Activated CD8-positive, alpha-beta memory T cell treated with anti-CD3 and anti-CD28 coated beads, Interleukin-2, amount 10 ng/mL, durations not matched to agents 7 days and 5 days (primary cell): ENCODE measurements at regions of chr4 and their contacts with region 1.

Region 1: DNA sequence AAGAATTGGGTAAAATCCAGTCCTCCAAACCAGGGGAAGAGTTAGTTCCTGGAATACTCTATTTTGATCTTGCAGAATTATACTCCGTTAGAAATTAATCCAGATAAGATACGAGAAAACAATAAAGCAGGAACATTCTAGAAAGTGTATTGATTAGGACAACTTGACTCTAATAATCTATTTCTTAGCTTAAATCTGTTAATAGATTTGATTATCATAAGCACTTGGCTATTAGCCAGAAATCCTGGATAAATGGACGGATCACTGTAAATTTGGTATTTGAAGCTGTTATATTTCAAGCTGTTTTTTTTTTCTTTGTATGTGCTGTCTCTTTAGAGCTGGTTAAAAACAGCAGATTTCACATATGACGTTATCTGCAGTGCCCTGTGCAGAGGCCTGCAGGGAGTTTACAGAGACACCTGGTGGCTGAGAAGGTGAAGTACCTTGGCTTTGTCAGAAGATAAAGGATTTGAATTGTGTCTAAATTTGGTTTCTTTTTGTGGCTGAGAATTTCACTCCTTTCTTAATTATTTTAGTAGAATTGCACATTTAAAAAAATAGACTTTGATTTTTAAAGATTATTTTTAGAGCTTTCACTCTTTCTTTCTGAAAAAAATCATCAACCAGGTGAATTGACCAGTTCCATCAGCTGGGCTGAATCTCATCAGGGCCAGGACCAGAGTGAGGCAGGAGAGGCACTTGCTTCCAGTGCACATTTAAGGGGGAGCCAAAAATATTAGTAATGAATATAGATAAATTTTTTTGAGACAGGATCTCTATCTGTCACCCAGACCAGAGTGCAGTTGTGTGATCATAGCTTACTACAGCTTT is 9.7 kb upstream of the CHRNA9 start:
- DNase-seq: peak; percentile 82
- ATAC-seq: peak; percentile 97
- H3K4me3 Mint-ChIP-seq: no peak overlapping the region
- H3K27ac Mint-ChIP-seq: no peak overlapping the region
- H3K4me1 Mint-ChIP-seq: peaks cover 25% of the 10 kb centered on the region
- H3K27me3 Mint-ChIP-seq: peaks cover 2% of the 10 kb centered on the region

Region 2: DNA sequence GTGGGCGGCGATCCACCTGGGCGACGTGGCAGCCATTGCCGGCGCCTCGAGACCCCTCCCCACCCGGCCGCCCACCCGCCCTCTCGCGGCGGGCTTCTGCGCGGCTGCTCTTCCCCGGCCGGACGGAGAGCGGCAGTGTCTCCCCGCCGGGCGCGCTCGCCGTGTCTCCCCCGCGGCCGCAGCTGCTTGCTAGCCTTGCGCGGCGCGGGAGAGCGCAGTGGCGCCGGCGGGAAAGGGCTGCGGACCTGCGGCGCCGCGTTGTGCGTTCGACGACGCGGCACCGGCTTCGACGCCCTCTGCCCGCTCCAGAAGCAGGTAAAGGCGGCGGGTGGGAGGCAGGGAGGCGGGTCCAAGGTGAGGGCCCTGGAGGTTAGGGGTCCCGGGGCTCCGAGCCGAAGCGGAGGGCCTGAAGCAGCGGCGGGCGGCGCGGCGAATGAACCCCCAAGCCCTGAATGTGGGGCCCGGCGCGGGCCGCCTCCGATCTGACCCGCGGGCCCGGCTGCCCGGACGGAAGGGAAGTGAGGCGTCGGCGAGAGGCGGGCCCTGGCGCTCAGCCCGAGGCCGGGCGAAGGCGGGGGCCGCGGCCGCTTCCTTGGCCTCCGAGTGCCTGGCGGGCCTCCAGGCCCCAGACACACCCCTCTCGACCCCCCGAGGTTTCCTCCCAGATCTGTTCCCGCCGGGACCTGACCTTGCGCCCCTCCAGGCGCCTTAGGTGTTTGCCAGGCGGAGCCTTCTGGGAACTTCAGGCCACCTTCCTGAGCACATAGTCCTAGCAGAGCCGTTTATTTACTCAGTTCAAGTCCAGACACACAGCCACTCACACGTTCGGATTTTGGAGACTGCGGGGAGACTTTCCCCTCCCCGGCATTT is 268.5 kb before region 1 on chr4 and contains the start of gene N4BP2:
- CTCF ChIA-PET with region 1: interaction called, 28 read pairs
- DNase-seq: peak; percentile 81
- ATAC-seq: peak; percentile 65
- H3K4me3 Mint-ChIP-seq: peak within 1 kb of the TSS; percentile 98
- H3K27ac Mint-ChIP-seq: peak within 1 kb of the TSS; percentile 99
- H3K4me1 Mint-ChIP-seq: peaks cover 32% of the 10 kb centered on the region
- H3K27me3 Mint-ChIP-seq: peaks cover 5% of the 10 kb centered on the region
- total RNA-seq, gene N4BP2: 26.5 to 28.4 TPM

Region 3: GRCh38 chr4:40149960-40150385 is 175.4 kb before region 1 on chr4:
- CTCF ChIA-PET with region 1: interaction called, 11 read pairs
- DNase-seq: peak; percentile 82
- ATAC-seq: peak; percentile 88
- H3K4me3 Mint-ChIP-seq: no peak overlapping the region
- H3K27ac Mint-ChIP-seq: peak overlapping the region; percentile 42
- H3K4me1 Mint-ChIP-seq: peaks cover 17% of the 10 kb centered on the region
- H3K27me3 Mint-ChIP-seq: no peaks in the 10 kb centered on the region

Region 4: GRCh38 chr4:40335508-40335860 is 10.1 kb after region 1 on chr4:
- CTCF ChIA-PET with region 1: interaction called, 10 read pairs
- DNase-seq: no peak
- ATAC-seq: no peak
- H3K4me3 Mint-ChIP-seq: no peak overlapping the region
- H3K27ac Mint-ChIP-seq: no peak overlapping the region
- H3K4me1 Mint-ChIP-seq: peaks cover 10% of the 10 kb centered on the region
- H3K27me3 Mint-ChIP-seq: peaks cover 12% of the 10 kb centered on the region